ENCODE measurements at regions of chr20 and their contacts with region 1.

Region 1: GRCh38 chr20:45436732-45437391 is 20.9 kb downstream of the PIGT start:
- DNase-seq: peak; percentile 85

Region 2: GRCh38 chr20:45373353-45374100 is 63.3 kb before region 1 on chr20:
- CTCF ChIA-PET with region 1: interaction called, 56 read pairs
- POLR2A ChIA-PET with region 1: interaction called, 16 read pairs
- DNase-seq: peak; percentile 83

Region 3: DNA sequence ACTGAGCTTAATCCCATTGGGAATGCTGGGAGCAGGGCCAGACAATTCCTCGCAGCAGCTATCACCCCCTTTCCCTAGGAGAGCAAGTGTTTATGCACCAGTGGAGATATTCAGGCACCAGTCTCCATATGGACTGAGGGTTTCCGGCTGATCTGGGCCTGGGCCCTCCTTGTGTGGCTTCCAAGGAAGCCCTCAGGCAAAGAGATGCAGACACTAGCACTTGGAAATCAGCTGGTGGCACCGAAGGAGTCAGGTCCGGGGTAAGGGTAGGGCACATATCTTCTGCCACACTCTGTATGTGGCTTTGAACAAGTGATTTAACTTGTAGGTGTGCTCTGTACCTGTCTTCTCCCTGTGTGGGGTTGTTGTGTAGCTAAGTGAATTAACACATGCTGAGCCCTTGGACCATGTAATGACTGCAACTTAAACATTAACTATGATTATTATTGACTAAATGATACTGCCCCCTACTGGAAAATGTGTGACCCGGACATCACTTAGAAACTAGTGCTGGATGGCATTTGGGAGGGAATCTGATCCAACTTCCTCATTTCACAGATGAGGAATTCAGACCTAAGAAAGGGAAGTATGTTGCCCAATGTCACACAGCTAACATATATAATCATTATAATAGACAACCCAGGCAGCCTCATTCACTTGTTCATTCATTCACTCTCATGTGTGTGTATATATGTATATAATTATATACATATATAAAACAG is 13.4 kb after region 1 on chr20:
- CTCF ChIA-PET with region 1: interaction called, 11 read pairs
- POLR2A ChIA-PET with region 1: interaction called, 3 read pairs
- DNase-seq: peak; percentile 52